ENCODE measurements at regions of chr9 and their contacts with region 1.

Region 1: DNA sequence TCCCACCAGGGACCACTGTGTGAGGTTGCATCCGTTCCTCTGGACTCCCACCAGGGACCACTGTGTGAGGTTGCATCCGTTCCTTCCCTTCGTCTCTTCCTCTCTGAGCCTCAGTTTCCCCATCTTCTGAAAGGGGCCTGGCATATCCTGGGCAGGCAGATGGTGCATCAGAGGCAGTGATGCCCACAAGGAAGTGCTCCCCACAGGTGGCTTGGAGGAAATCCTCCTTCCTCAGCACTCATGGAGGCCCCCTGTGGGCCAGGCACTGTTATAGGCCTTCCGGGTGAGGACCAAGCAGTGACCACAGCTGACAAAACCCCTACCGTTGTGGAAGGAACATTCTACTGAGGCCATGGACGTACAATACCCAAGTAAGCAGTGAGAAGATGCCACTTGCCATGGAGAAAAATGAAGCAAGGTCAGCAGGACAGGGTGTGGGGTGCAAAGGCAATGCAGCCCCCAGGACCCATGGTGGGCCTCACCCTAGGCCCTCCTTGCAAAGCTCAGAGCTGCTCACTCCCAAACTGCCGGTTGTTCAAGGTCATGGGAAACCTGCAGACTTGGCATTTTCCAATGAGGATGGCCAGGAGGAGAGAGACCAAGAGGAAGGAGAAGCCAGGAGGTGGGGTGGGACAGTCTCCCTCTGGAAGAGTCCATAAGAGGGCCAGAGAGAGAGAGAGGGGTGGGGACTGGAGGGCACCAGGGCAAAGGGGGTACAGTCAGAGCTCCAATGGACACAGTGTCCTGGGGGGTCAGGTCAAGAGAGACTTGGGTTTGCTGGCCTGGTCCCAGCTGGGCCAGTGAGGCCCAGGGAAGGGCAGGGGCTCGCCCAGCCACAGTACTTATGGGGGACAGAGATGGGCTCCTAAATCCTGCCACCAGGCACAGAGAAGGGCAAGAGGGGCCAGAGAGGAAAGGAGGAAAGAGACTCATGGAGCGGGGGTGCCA is 51.1 kb downstream of the C9orf50 start:
- DNase-seq: peak; percentile 52 to 56
- H3K4me3 ChIP-seq: peak overlapping the region; percentile 1; the same call in 1 of the 2 replicates
- H3K27ac ChIP-seq: peak overlapping the region; percentile 90
- H3K4me1 ChIP-seq: peaks cover 36% of the 10 kb centered on the region
- H3K27me3 ChIP-seq: no peaks in the 10 kb centered on the region
- CTCF ChIP-seq: peak; percentile 67

Region 2: GRCh38 chr9:129139993-129140396 is 429.8 kb before region 1 on chr9:
- CTCF ChIA-PET with region 1: interaction called, 5 read pairs
- POLR2A ChIA-PET with region 1: no interaction called
- intact Hi-C with region 1: loop called (anchors 1 kb)
- DNase-seq: peak; percentile 85 to 95
- H3K4me3 ChIP-seq: peak overlapping the region; percentile 91
- H3K27ac ChIP-seq: peak overlapping the region; percentile 100
- H3K4me1 ChIP-seq: peaks cover 43% of the 10 kb centered on the region
- H3K27me3 ChIP-seq: no peaks in the 10 kb centered on the region
- CTCF ChIP-seq: no peak

Region 3: GRCh38 chr9:129278391-129279237 is 291.2 kb before region 1 on chr9:
- CTCF ChIA-PET with region 1: no interaction called
- POLR2A ChIA-PET with region 1: interaction called, 5 read pairs
- intact Hi-C with region 1: loop called (anchors 5 kb)
- DNase-seq: peak; percentile 86 to 97
- H3K4me3 ChIP-seq: peak overlapping the region; percentile 58; the same call in 1 of the 2 replicates
- H3K27ac ChIP-seq: peak overlapping the region; percentile 79
- H3K4me1 ChIP-seq: peaks cover 51% of the 10 kb centered on the region
- H3K27me3 ChIP-seq: no peaks in the 10 kb centered on the region
- CTCF ChIP-seq: no peak

Region 4: DNA sequence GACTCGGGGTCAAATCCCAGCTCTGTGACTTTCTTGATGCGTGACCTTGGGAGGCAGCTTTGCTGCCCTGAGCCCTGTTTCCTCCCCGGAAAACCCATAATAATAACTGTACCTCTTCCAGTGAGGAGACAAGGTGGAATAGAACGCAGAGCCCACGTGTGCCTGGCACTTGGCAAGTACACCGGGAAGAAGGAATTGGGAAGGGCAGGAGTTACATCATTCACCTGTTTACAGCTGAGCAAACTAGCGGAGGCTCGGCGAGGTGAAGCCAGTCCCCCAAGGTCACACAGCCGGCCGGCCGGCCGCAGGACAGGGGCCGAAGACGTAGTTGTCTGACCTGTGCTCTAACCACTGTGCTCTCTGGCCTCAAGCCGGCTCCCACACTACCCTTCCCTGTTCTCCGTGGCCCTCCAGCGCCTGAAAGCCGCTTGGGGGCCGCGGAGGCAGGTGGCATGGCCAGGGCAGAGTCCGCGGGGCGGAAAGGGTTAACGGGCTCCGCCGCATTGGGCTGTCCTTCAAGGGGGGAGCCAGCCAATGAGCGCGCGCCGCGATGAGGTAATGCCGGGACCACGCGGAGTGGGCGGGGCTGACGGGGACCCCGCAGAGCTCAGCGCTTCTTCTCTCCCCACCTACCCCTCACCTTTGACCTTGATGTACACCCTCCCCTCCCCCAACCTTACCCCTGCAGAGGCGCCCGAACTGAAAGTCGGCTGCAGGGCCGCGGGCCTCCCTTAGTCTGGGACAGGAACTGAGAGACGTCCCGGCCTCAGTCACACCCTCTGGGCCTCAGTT is 74.0 kb before region 1 on chr9:
- CTCF ChIA-PET with region 1: interaction called, 3 read pairs
- POLR2A ChIA-PET with region 1: interaction called, 4 read pairs
- intact Hi-C with region 1: loop called (anchors 2 kb)
- DNase-seq: peak; percentile 78 to 95
- H3K4me3 ChIP-seq: peak overlapping the region; percentile 60
- H3K27ac ChIP-seq: peak overlapping the region; percentile 64
- H3K4me1 ChIP-seq: peaks cover 52% of the 10 kb centered on the region
- H3K27me3 ChIP-seq: no peaks in the 10 kb centered on the region
- CTCF ChIP-seq: no peak

Region 5: DNA sequence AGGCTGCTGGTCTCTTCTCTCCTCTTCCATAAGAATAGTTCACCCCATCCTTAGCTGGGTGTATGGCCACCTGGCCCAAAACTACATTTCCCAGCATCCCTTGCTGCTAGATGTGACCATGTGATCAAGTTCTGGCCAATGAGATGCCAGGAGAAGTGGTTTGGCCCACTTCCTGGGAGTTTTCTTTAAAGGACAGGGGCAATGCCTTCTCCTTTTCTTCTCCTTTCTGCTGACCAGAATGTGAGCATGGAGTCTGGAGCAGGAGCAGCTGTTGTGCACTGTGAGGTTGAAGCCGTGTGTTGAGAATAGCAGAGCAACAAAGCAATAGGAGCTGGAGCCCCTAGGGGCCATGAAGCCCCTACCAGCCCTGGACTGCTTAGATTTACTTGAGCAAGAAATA is 14.4 kb after region 1 on chr9:
- CTCF ChIA-PET with region 1: interaction called, 10 read pairs
- POLR2A ChIA-PET with region 1: no interaction called
- intact Hi-C with region 1: no loop called
- DNase-seq: peak; percentile 63 to 65
- H3K4me3 ChIP-seq: no peak overlapping the region
- H3K27ac ChIP-seq: no peak overlapping the region
- H3K4me1 ChIP-seq: peaks cover 14% of the 10 kb centered on the region
- H3K27me3 ChIP-seq: no peaks in the 10 kb centered on the region
- CTCF ChIP-seq: no peak

Region 6: DNA sequence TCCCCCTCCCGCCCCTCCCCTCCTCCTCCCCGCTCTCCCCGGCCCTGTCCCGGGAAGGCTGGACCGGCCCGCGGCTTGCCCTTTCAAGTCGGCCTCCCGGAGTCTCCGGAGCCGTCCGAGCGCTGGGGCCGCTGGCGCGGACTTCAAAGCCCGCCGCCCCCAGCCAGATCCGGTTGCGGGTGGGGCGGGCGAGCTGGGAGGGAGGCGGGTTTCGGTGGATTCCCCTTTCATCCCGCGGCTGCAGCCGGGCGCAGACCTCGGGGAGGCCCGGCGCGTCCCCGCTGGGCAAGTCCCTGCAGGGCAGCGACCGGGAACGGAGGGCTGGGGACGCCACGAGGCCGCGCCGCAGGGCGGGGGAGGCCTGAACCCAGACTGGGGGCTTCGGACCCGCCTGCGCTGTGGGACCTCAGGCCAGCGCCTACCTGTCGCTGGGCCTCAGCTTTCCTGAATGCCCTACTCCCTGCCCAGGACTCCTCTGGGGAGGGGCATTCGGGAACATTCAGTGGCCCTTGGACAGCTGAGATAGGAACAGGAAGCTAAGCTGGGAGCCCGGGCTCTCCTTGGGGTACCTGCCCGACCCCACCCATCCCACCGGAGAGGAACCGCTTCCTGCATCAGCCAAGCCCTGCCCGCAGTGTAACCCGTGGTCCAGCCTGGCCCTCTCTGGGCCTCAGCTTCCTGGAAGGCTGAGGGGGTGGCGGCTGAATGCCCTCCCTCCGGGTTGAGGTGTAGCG is 27.7 kb after region 1 on chr9:
- CTCF ChIA-PET with region 1: no interaction called
- POLR2A ChIA-PET with region 1: interaction called, 14 read pairs
- intact Hi-C with region 1: loop called (anchors 1 kb)
- DNase-seq: peak in 1 of 2 experiments; percentile 77
- H3K4me3 ChIP-seq: peak overlapping the region; percentile 70
- H3K27ac ChIP-seq: peak overlapping the region; percentile 58
- H3K4me1 ChIP-seq: peaks cover 34% of the 10 kb centered on the region
- H3K27me3 ChIP-seq: no peaks in the 10 kb centered on the region
- CTCF ChIP-seq: no peak

Measured in PC-9 (cell line).